ENCODE measurements at regions of chr4 and their contacts with region 1.

Region 1: GRCh38 chr4:186946682-186947294 is 223.1 kb upstream of the FAT1 start:
- DNase-seq: no peak
- ATAC-seq: no peak

Region 2: DNA sequence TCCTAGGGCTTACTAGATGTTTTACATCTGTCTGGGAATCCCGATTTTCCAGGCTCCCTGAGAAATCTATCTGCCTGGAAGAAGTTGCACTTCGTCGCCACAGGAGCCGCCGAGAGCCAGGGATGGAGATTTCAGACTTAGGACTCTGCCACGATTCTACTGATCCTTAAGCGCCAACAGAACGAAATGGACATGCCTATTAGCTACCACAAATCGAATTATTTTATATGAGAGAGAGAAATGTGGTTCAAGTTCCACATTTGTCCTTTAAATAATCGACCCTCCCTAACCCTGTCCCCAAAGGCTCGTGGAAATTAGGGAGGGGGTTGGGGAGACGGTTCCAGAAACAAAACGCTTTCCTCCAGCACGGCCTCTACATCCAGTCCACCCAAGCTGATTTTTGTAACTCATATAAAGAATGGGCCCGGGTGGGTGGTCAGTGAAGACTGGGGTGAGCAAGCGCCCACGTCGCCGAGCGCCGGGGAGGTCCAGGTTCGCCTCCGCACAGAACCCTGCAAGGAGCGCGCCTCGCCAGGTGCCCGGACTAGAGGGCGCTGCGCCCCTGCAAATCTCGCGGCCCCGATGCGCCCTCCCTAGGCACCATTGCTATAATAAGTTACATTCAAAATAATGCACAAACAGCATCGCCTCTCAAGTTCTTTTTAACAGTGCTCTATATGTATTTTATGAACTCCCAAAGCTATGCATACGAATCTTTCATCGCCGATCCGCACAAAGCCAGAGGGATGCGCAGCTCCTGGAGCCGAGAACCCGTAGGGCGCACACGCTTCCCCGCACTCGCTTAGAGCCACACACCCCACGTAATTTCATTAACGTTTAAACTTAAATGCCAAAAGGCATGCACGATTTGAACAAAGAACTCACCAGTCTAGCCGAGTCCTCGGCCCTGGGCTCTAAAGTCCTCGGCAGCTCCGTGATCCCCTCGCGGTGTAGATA is 221.0 kb before region 1 on chr4:
- intact Hi-C with region 1: loop called (anchors 5 kb)
- DNase-seq: peak; percentile 82
- ATAC-seq: peak; percentile 83

Region 3: DNA sequence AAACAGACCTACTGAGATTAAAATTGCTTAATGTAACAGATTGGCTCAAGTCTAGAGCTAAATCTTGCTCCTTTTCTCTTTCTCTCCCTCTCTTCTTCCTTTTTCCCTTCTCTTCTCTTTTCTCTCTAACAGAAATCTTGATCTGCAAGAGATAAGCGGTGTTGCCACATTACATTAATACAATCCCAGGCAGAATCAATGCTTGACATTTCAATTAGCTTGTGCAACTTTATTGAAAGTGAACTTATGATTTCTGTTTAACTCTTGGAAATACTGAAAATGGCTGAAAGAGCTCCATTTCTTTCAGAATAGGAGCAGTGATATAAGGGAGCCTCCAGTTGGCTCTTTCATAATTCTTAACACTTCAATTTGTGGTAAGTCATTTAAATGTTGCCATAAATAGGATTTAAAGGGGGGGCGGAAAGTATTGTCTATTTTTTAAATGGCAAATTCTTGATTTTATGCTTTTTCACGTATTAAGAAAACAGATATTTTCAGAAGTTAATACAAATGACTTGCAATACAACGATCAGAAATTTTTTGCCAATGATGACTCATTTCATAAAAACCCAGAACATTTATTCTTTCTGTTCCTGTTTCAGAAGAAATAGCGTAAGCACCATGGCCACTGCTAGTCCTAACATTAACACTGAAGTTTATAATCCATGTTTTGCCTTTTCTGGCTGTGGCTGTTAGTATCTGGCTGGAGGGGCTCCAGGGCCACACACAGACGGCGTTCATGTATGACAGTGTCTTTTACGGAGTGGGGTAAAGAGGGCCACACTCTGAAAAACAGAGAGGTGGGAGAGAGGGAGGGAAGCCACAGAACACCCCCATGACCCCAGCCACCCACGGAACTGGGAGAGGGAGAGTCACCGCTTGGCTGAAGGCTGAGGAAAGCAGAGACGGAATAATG is 107.4 kb before region 1 on chr4:
- intact Hi-C with region 1: loop called (anchors 10 kb)
- DNase-seq: no peak
- ATAC-seq: peak; percentile 30

Region 4: GRCh38 chr4:187179086-187180058 is 232.6 kb after region 1 on chr4:
- intact Hi-C with region 1: loop called (anchors 5 kb)
- DNase-seq: no peak
- ATAC-seq: peak; percentile 62

Measured in Right ventricle myocardium inferior (tissue), 1 donor.